ENCODE measurements at regions of chr6 and their contacts with region 1.

Region 1: DNA sequence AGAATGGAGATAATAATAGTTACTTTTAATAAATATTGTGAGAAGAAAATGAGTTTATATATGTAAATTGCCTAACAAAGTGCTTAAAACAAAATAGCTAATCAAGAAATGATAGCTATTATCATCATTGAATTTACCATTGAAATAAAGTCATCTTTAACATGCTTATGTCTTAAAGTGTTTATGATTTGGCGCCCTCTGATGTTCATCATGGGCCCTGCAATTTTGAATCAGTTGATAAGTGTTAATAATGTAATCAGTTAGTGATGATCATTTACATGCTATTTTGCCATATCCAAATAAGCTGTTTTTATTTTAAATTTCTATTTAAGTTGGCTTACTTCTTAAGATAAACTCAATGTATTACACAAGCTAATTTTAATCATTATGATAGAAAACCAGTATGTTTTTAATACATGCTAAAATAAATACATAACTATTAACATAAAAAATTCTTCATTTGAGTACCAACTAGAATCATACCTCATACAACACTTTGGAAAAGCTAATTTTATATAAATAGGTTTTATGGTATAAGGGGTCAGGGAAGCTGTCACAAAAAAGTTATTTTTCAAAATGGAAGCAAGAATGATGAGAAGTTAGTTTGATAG is 39.2 kb upstream of the TPD52L1 start:
- DNase-seq: peak; percentile 42
- ATAC-seq: no peak
- H3K4me3 Mint-ChIP-seq: no peak overlapping the region
- H3K27ac Mint-ChIP-seq: no peak overlapping the region
- H3K4me1 Mint-ChIP-seq: peaks cover 2% of the 10 kb centered on the region
- H3K27me3 Mint-ChIP-seq: no peaks in the 10 kb centered on the region
- CTCF ChIP-seq: peak; percentile 69

Region 2: GRCh38 chr6:124870611-124871459 is 243.5 kb before region 1 on chr6:
- CTCF ChIA-PET with region 1: interaction called, 20 read pairs
- POLR2A ChIA-PET with region 1: no interaction called
- DNase-seq: no peak
- ATAC-seq: no peak
- H3K4me3 Mint-ChIP-seq: no peak overlapping the region
- H3K27ac Mint-ChIP-seq: no peak overlapping the region
- H3K4me1 Mint-ChIP-seq: peaks cover 4% of the 10 kb centered on the region; the same call in 1 of the 2 replicates
- H3K27me3 Mint-ChIP-seq: no peaks in the 10 kb centered on the region
- CTCF ChIP-seq: peak; percentile 41; the same call in 1 of the 2 replicates